Calu3 (cell line): ENCODE measurements at regions of chr3 and their contacts with region 1.

Region 1: DNA sequence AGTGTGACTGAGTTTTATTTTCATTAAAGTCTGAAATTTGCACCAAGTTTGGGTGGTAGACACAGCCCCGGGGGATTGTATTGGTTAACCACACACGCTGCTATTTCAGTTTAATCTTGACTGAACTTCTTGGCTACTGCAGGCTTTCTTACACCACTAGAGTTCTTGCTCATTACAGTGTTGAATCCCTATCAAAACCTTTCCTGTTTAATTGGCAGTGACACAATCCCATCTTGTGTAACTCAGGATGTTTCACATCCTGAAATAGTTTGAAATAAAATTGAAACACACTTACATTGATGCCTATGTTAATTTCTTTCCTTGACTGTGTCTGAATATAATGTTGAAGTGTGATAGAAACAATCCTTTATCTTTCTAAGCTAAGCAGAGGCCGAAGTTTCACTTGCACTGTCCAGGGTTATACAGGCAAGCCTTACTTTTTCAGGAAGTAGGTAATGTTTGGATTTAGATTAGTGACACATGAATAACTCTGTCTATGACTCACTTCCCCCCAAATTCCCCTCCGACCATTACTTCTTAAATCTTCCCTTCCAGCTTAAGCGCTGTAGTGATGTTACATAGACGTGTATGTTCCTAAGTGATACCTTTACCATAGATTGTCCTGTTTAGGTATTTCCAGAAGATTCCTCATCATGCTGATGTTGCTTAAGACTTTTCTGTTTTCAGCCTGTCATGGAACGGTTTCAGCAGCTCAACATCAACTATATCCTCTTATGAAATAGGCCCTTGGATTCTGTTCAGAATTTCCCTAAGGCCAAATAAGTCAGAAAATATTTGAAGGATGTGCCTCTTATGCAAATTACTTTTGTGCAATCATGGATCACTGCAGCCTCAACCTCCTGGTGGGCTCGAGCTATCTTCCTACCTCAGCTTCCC is 16.8 kb downstream of the ATG7 start:
- DNase-seq: peak; percentile 9
- H3K4me3 Mint-ChIP-seq: peak overlapping the region; percentile 8
- H3K27ac Mint-ChIP-seq: peak overlapping the region; percentile 75
- H3K4me1 Mint-ChIP-seq: peaks cover 53% of the 10 kb centered on the region
- H3K27me3 Mint-ChIP-seq: no peaks in the 10 kb centered on the region
- CTCF ChIP-seq: no peak

Region 2: GRCh38 chr3:11140054-11140712 is 148.9 kb before region 1 on chr3:
- CTCF ChIA-PET with region 1: no interaction called
- intact Hi-C with region 1: no loop called
- DNase-seq: peak; percentile 18
- H3K4me3 Mint-ChIP-seq: peak overlapping the region; percentile 52
- H3K27ac Mint-ChIP-seq: peak overlapping the region; percentile 46
- H3K4me1 Mint-ChIP-seq: peaks cover 26% of the 10 kb centered on the region
- H3K27me3 Mint-ChIP-seq: no peaks in the 10 kb centered on the region
- CTCF ChIP-seq: no peak

Region 3: GRCh38 chr3:11236595-11237461 is 52.2 kb before region 1 on chr3:
- CTCF ChIA-PET with region 1: interaction called, 3 read pairs
- intact Hi-C with region 1: loop called (anchors 2 kb)
- DNase-seq: peak; percentile 91
- H3K4me3 Mint-ChIP-seq: no peak overlapping the region
- H3K27ac Mint-ChIP-seq: no peak overlapping the region
- H3K4me1 Mint-ChIP-seq: peaks cover 10% of the 10 kb centered on the region
- H3K27me3 Mint-ChIP-seq: no peaks in the 10 kb centered on the region
- CTCF ChIP-seq: peak; percentile 40